PC-9 (cell line): ENCODE measurements at regions of chr22 and their contacts with region 1.

Region 1: GRCh38 chr22:27804470-27805297 is 3.1 kb upstream of the MN1 start:
- DNase-seq: peak; percentile 52 to 56
- H3K4me3 ChIP-seq: no peak overlapping the region
- H3K27ac ChIP-seq: no peak overlapping the region
- H3K4me1 ChIP-seq: peaks cover 6% of the 10 kb centered on the region
- H3K27me3 ChIP-seq: no peaks in the 10 kb centered on the region
- CTCF ChIP-seq: peak; percentile 84

Region 2: GRCh38 chr22:26672590-26673468 is 1131.9 kb before region 1 on chr22:
- CTCF ChIA-PET with region 1: no interaction called
- POLR2A ChIA-PET with region 1: no interaction called
- intact Hi-C with region 1: loop called (anchors 5 kb)
- DNase-seq: peak; percentile 82 to 85
- H3K4me3 ChIP-seq: peak overlapping the region; percentile 86
- H3K27ac ChIP-seq: peak overlapping the region; percentile 93
- H3K4me1 ChIP-seq: peaks cover 14% of the 10 kb centered on the region
- H3K27me3 ChIP-seq: no peaks in the 10 kb centered on the region
- CTCF ChIP-seq: peak; percentile 59

Region 3: GRCh38 chr22:27405672-27406388 is 398.9 kb before region 1 on chr22:
- CTCF ChIA-PET with region 1: no interaction called
- POLR2A ChIA-PET with region 1: no interaction called
- intact Hi-C with region 1: loop called (anchors 1 kb)
- DNase-seq: peak in 1 of 2 experiments; percentile 64
- H3K4me3 ChIP-seq: no peak overlapping the region
- H3K27ac ChIP-seq: no peak overlapping the region
- H3K4me1 ChIP-seq: no peaks in the 10 kb centered on the region
- H3K27me3 ChIP-seq: no peaks in the 10 kb centered on the region
- CTCF ChIP-seq: peak; percentile 88

Region 4: DNA sequence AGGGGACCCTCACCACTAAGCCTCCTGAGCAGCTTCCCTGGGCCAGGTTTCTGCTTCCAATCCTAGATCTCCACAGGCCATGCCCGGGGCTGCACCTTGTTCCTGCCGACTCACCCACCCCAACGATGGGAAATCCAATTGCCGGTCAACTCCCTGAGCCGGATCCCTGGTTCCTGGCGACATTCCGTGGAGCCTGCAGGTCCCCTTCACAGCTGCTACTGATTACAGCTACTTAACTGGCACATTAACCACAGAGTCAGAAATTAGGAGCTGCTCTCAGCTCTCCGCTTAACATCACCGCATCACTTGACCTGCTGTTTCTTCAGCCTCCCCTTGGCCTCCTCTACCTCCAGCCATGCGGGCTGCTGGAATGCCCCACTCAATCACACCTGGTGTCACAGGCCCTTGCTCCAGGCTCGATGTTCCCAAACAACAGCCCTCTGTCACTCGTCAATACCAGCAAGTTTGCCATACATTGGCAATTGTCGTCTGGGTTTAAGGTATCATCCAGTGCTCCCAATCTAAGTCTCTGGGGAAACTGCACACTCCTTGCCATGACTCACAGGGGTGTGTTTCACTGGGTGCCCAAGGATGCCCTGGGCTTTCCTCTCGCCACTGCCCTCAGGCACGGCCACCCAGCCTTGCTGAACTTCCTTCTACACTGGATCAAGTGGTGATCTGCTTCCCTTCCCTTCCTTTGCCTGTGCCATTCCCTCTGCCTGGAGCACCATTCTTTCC is 184.1 kb before region 1 on chr22:
- CTCF ChIA-PET with region 1: no interaction called
- POLR2A ChIA-PET with region 1: no interaction called
- intact Hi-C with region 1: loop called (anchors 2 kb)
- DNase-seq: peak; percentile 67 to 90
- H3K4me3 ChIP-seq: no peak overlapping the region
- H3K27ac ChIP-seq: peak overlapping the region; percentile 78
- H3K4me1 ChIP-seq: peaks cover 24% of the 10 kb centered on the region
- H3K27me3 ChIP-seq: no peaks in the 10 kb centered on the region
- CTCF ChIP-seq: no peak

Region 5: GRCh38 chr22:27668828-27669797 is 135.6 kb before region 1 on chr22:
- CTCF ChIA-PET with region 1: no interaction called
- POLR2A ChIA-PET with region 1: interaction called, 15 read pairs
- intact Hi-C with region 1: loop called (anchors 1 kb)
- DNase-seq: peak; percentile 87 to 94
- H3K4me3 ChIP-seq: peak overlapping the region; percentile 17; the same call in 1 of the 2 replicates
- H3K27ac ChIP-seq: peak overlapping the region; percentile 86
- H3K4me1 ChIP-seq: peaks cover 44% of the 10 kb centered on the region
- H3K27me3 ChIP-seq: no peaks in the 10 kb centered on the region
- CTCF ChIP-seq: no peak